ENCODE measurements at regions of chr1 and their contacts with region 1.

Region 1: GRCh38 chr1:223102797-223103533 is 40.1 kb downstream of the TLR5 start:
- DNase-seq: peak in 1 of 2 experiments; percentile 54
- H3K4me3 ChIP-seq: no peak overlapping the region
- H3K27ac ChIP-seq: no peak overlapping the region
- H3K4me1 ChIP-seq: no peaks in the 10 kb centered on the region
- H3K27me3 ChIP-seq: 0 out of 2 replicates have a peak, but pooled peaks cover 7% of the 10 kb centered on the region
- CTCF ChIP-seq: no peak

Region 2: DNA sequence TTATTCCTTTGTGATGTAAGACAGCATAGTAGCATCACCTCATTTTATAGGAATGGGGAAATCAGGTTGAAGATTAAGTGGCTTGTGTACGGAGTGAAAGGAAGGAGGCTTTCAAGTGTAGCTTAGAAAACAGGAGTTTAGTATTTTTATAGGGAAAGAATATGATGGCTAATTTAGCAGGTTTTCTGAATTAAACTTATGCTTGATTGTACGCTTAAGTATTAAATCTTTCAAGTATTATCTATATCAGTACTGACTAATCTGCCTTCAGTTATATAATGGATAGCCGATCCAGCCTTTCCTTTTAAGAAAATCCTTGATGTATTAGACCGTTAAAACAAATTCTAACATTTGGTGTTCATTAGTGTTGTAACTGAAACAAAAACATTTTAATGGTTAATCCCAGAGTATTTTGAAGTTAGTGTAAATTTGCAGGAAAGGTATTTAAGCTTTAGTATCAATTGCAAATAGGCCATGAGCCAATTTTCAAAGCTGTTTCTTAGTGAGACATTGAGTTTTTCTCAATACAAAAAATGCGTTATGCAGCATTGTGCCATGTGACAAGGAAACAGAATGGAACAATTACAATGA is 258.7 kb before region 1 on chr1:
- CTCF ChIA-PET with region 1: no interaction called
- POLR2A ChIA-PET with region 1: no interaction called
- intact Hi-C with region 1: no loop called
- DNase-seq: no peak
- H3K4me3 ChIP-seq: no peak overlapping the region
- H3K27ac ChIP-seq: no peak overlapping the region
- H3K4me1 ChIP-seq: no peaks in the 10 kb centered on the region
- H3K27me3 ChIP-seq: no peaks in the 10 kb centered on the region
- CTCF ChIP-seq: no peak

Region 3: GRCh38 chr1:223087291-223088255 is 15.4 kb before region 1 on chr1:
- CTCF ChIA-PET with region 1: interaction called, 14 read pairs
- POLR2A ChIA-PET with region 1: no interaction called
- intact Hi-C with region 1: no loop called
- DNase-seq: no peak
- H3K4me3 ChIP-seq: no peak overlapping the region
- H3K27ac ChIP-seq: no peak overlapping the region
- H3K4me1 ChIP-seq: no peaks in the 10 kb centered on the region
- H3K27me3 ChIP-seq: 0 out of 2 replicates have a peak, but pooled peaks cover 6% of the 10 kb centered on the region
- CTCF ChIP-seq: no peak

Region 4: DNA sequence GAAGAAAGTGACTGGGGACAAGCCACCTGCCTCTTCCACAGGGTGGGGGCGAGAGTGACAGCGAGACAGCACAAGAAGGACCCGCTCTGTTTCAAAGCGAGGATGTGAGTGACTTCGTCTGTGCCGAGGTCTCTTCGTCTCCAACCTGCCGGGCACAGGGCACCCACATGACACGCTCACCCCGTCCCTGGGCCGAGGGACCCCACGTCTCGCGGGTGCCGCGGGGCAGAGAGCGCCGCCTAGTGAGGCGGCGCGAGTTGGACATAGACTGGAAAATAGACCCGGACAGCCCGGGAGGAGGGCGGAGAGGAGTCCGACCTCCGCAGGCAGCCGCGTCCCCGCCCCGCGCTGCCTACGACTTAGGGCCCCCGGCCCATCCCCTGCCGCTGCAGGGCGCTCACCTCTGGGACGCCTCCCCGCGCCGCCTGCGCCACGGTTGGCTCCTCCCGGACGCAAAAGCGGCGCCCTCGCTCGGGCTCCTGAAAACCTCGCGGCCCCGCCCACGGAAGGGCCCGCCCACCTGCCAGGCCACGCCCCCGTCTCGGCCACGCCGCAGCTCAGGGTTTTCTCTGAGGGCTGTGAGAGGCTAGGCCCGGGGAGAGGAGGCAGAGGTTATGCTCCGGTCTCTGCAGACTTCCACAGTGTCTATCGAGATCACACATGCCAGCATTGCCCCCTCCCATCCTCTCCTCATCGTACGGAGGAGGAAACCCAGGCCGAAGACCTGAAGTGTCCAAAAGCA is 40.0 kb after region 1 on chr1 and contains the start of gene TLR5:
- CTCF ChIA-PET with region 1: no interaction called
- POLR2A ChIA-PET with region 1: no interaction called
- intact Hi-C with region 1: no loop called
- DNase-seq: peak; percentile 76 to 88
- H3K4me3 ChIP-seq: peak within 1 kb of the TSS; percentile 61
- H3K27ac ChIP-seq: no peak within 1 kb of the TSS
- H3K4me1 ChIP-seq: peaks cover 15% of the 10 kb centered on the region; the same call in 1 of the 2 replicates
- H3K27me3 ChIP-seq: no peaks in the 10 kb centered on the region
- CTCF ChIP-seq: peak; percentile 83
- total RNA-seq, gene TLR5: 2.5 and 3.4 TPM in 2 replicates

Region 5: GRCh38 chr1:223153177-223154119 is 50.5 kb after region 1 on chr1:
- CTCF ChIA-PET with region 1: no interaction called
- POLR2A ChIA-PET with region 1: no interaction called
- intact Hi-C with region 1: no loop called
- DNase-seq: no peak
- H3K4me3 ChIP-seq: no peak overlapping the region
- H3K27ac ChIP-seq: no peak overlapping the region
- H3K4me1 ChIP-seq: peaks cover 10% of the 10 kb centered on the region
- H3K27me3 ChIP-seq: no peaks in the 10 kb centered on the region
- CTCF ChIP-seq: no peak

Measured in PC-9 (cell line).